Activated CD4-positive, alpha-beta T cell treated with anti-CD3 and anti-CD28 coated beads, Interleukin-2, amount 10 ng/mL, durations not matched to agents 24 days and 14 days (primary cell): ENCODE measurements at regions of chr6 and their contacts with region 1.

Region 1: DNA sequence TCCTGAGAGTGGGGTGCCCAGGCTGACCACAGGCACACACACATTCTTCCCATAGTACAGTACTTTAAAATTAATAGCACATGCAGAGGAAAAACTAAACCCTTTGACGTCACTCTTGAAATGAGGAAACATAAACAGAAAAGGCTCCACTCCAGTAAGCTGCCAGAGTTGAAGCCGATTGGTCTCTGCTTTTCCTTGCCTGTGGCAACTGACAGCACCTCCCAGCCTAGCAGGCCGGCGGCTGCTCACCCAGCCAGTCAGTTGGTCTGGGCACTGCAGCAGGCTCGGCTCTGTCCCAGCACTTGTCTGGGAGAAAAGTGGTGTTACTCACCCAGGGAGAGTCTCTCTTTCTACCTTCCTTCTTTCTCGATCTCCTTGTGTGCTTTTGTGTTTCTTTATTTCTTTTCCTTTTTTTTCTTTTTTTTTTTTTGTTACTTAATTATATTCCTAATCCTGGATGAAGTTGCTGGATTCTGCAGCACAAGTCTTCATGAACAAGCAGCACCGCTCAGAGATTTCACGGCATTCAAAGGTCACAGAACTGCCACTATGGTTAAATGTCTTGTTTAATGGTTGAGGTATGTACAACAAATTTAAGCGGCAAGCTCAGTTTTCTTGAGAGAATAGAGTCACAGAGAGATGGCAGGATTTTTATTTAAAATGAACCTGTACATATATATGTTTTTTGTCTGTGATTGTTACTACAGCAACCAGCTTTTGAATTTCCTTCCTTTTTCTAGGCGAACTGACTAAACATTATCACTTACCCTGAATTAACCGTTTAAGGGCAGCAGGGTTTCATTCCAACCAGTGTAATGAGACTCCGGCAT is at the start of gene PDE7B:
- DNase-seq: peak; percentile 91
- H3K4me3 Mint-ChIP-seq: peak within 1 kb of the TSS; percentile 81
- H3K27ac Mint-ChIP-seq: peak within 1 kb of the TSS; percentile 86
- H3K4me1 Mint-ChIP-seq: peaks cover 30% of the 10 kb centered on the region
- H3K27me3 Mint-ChIP-seq: no peaks in the 10 kb centered on the region
- total RNA-seq, gene PDE7B: 15.4 and 16.0 TPM in 2 replicates

Region 2: GRCh38 chr6:135212020-135212806 is 639.4 kb before region 1 on chr6:
- intact Hi-C with region 1: no loop called
- DNase-seq: no peak
- H3K4me3 Mint-ChIP-seq: peak overlapping the region; percentile 69
- H3K27ac Mint-ChIP-seq: peak overlapping the region; percentile 84
- H3K4me1 Mint-ChIP-seq: peaks cover 40% of the 10 kb centered on the region
- H3K27me3 Mint-ChIP-seq: no peaks in the 10 kb centered on the region

Region 3: GRCh38 chr6:135497412-135498269 is 354.0 kb before region 1 on chr6 and contains the start of gene AHI1:
- intact Hi-C with region 1: loop called (anchors 5 kb)
- DNase-seq: peak; percentile 97
- H3K4me3 Mint-ChIP-seq: no peak within 1 kb of the TSS
- H3K27ac Mint-ChIP-seq: no peak within 1 kb of the TSS
- H3K4me1 Mint-ChIP-seq: peaks cover 18% of the 10 kb centered on the region
- H3K27me3 Mint-ChIP-seq: no peaks in the 10 kb centered on the region
- total RNA-seq, gene AHI1: 155 and 160 TPM in 2 replicates

Region 4: GRCh38 chr6:135675862-135676261 is 175.8 kb before region 1 on chr6:
- intact Hi-C with region 1: loop called (anchors 10 kb)
- DNase-seq: peak; percentile 85
- H3K4me3 Mint-ChIP-seq: peak overlapping the region; percentile 32
- H3K27ac Mint-ChIP-seq: peak overlapping the region; percentile 74
- H3K4me1 Mint-ChIP-seq: peaks cover 39% of the 10 kb centered on the region
- H3K27me3 Mint-ChIP-seq: no peaks in the 10 kb centered on the region

Region 5: DNA sequence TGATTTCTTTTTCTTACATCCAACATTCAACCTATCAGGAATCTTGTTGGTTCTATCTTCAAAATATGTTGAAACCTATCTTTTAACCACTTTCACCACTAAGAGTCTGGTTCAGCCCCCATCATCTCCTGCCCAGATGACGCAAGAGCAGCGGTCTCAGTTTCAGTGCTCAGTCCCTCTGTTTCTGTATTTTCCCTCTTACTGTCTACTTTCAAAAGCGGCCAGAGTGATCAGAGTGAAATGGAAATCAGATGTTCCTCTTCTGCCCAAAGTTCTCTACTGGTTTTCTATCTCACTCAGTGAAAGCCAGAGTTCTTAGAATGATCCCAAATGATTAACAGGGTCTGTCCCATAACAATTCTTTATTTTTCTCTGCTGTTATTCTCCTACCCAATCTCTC is 148.0 kb before region 1 on chr6:
- intact Hi-C with region 1: loop called (anchors 5 kb)
- DNase-seq: no peak
- H3K4me3 Mint-ChIP-seq: no peak overlapping the region
- H3K27ac Mint-ChIP-seq: peak overlapping the region; percentile 60
- H3K4me1 Mint-ChIP-seq: peaks cover 24% of the 10 kb centered on the region
- H3K27me3 Mint-ChIP-seq: peaks cover 2% of the 10 kb centered on the region

Region 6: DNA sequence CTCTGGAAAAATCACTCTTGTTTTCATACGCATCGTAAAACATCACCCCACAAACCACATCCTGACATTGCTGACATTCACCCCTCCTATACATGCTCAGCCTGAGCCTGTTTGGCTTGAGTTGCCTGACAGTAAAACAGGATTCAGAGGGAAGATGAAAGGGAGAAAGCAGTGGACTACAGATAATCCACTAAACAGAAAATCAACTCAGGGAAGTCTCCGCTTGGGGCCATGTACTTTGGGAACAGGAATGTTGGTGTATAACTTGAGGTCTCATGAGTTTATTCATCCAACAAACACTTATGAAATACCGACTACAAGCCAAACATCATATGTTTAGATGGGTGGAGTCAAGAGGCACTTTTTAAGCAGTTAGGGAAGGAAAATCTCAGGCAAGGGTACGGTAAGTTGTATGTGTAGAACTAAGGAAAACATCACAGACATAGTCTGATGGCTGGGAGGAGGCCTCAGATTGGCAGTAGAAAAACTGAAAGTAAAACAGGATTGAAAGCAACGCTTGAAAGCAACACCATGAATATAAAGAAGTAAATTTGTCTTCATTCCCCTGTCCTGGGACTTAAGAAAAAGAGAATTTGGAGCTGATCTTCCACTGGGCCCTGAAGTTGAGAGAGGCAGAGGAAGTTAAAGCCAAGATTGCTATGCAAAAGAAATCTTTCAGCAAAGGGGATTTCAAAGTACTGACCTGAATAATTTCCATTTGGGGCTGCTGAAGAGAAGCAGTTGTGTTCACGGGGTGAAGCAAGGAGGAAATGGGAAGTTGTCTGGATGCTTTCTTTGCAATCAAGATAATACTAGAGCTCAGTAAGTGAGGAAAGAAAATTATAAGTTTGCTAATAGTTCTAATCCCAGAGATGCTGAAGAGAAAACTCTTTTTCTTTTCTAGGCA is 28.7 kb after region 1 on chr6:
- intact Hi-C with region 1: loop called (anchors 1 kb)
- DNase-seq: peak; percentile 91
- H3K4me3 Mint-ChIP-seq: peak overlapping the region; percentile 81
- H3K27ac Mint-ChIP-seq: peak overlapping the region; percentile 97
- H3K4me1 Mint-ChIP-seq: peaks cover 57% of the 10 kb centered on the region
- H3K27me3 Mint-ChIP-seq: no peaks in the 10 kb centered on the region

Region 7: GRCh38 chr6:135901774-135902524 is 50.3 kb after region 1 on chr6:
- intact Hi-C with region 1: loop called (anchors 2 kb)
- DNase-seq: peak; percentile 65
- H3K4me3 Mint-ChIP-seq: peak overlapping the region; percentile 66
- H3K27ac Mint-ChIP-seq: peak overlapping the region; percentile 84
- H3K4me1 Mint-ChIP-seq: peaks cover 49% of the 10 kb centered on the region
- H3K27me3 Mint-ChIP-seq: no peaks in the 10 kb centered on the region

Region 8: DNA sequence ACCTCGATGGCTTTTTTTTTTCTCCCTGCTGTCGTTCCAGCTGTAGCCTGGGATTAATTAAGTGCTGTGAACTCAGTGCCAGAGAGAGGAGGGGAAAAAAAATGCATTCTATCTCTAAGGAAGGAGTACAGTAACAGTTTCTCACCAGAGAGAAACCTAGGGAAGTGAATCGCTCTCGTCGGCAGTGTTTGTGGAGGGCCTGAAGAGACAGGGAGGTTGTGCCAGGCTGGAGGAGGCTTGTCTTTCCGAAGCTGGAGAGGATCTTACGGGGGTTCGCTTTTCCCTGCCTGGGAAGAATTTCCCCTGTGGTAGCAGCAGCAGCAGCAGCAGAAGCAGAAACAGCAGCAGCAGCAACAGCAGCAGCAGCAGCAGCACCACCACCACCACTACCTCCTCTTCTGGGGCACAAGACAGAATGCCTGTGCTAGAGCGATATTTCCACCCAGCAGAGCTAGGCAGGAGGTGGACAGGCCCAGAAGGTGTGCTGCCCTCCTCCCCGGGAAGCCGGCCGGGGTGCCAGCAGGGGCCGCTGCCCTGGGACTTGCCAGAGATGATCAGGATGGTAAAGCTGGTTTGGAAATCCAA is 186.3 kb after region 1 on chr6:
- intact Hi-C with region 1: no loop called
- DNase-seq: no peak
- H3K4me3 Mint-ChIP-seq: peak overlapping the region; percentile 27
- H3K27ac Mint-ChIP-seq: peak overlapping the region; percentile 25
- H3K4me1 Mint-ChIP-seq: peaks cover 11% of the 10 kb centered on the region
- H3K27me3 Mint-ChIP-seq: peaks cover 7% of the 10 kb centered on the region